Right ventricle myocardium inferior (tissue), 1 donor: ENCODE measurements at regions of chrX and their contacts with region 1.

Region 1: DNA sequence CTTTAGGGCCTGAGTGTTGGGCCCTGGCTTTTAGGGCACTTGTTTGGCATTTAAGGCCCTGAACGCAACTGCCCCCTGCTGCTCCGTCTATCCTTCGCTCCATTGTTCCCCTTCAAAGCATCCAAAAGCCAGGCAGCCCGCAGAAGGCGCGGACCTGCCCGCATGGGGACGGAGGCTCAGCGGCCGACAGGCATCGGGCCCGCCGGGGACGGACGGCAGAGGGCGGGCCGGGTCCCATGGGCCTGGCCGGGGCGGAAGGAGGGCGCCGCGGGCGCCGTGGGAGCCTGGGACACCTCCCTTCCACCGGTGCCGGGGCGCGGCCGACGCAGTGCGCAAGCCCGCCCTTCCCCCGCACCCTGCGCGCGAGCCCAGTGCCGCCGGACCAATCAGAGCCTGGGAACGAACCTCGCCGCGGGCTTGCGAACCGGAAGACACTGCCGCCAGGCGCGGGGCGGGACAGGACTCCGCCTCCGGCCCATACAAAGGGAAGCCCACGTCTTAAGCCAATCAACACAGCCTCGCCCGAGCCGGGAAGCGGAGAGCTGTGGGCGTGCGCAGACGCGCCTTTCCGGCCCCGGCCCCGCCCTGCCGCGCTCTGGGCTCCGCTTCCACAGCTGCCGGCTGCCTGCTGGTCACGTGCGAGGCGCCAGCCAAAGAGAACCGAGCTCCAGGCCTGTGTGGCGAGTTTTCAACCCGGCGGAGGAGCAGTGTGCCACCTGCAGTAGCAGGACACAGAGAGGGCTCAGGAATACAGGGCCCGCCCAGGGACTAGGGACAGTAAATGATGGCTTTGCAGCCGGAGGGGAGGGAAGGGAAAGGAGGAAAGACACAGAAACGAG is 2.1 kb upstream of the ARHGAP4 start:
- DNase-seq: peak; percentile 97
- ATAC-seq: peak; percentile 96

Region 2: DNA sequence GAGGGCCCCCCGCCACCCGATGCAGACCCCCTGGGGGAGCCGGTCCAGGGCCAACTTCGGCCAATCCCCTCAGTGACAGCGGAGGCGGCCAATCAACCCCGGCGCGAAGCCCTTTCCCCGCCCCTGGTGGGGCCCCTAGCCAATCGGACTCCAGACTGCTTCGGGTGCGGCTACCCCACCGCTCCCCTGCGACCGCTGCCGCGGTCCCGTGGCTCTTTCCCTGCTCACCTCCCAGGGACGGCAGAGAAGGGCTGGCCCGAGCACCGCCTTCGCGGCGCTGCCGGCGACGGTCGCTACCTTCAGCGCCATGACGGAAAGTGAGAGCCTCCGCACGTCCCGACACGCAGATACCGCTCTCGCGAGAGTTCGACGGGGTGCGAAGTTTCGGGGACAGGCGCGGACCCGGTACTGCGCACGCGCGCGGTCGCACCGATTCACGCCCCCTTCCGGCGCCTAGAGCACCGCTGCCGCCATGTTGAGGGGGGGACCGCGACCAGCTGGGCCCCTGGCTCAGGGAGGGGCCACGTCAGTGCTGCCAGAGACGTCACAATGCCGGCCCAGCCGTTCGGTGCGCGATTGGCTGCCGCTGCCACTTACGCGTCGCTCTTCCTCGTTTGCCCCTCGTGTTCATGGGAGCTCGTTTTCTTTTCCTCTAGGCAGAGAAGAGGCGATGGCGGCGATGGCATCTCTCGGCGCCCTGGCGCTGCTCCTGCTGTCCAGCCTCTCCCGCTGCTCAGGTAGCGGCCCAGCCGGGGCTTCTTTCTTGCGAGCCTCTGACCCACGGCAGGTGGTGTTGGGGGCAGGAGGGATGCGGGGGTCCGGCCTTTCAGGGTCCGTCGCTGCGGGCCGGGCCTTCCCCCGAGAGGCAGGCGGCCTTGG is 133.9 kb before region 1 on chrX and contains the starts of genes IDH3G and SSR4:
- intact Hi-C with region 1: loop called (anchors 1 kb)
- DNase-seq: peak; percentile 97
- ATAC-seq: peak; percentile 96
- total RNA-seq, gene IDH3G: 78.7 TPM
- total RNA-seq, gene SSR4: 150 TPM

Region 3: GRCh38 chrX:154002215-154002719 is 74.1 kb after region 1 on chrX:
- intact Hi-C with region 1: no loop called
- DNase-seq: no peak
- ATAC-seq: peak; percentile 56

Region 4: DNA sequence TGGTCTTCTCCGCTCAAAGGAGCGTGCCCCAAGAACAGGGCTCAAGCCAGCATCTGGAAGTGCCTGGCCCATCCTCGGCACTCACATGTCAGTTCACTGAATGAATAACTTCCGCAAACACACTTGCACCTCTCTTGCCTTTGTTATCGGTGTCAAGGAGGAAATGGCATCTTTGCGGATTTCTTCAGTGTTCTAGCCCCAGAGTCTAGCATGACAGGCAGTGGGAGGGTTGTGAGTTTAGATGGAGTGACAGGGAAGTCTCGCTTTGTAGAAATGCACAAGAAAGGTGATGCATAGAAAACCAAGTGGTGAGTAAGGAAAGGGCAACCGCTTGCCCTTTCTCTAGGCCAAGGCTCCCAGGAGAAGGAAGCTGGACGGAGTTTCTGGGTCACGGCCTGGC is 186.9 kb after region 1 on chrX:
- intact Hi-C with region 1: no loop called
- DNase-seq: no peak
- ATAC-seq: no peak